ENCODE measurements at regions of chr3 and their contacts with region 1.

Region 1: GRCh38 chr3:126197854-126198584 is 17.6 kb upstream of the ALDH1L1 start:
- DNase-seq: peak; percentile 68 to 82
- ATAC-seq: peak; percentile 97 to 100
- H3K4me3 ChIP-seq: peak overlapping the region in 1 of 4 donors; percentile 15
- H3K27ac ChIP-seq: peak overlapping the region; percentile 27 to 65 (median 44)
- H3K4me1 ChIP-seq: peaks cover 0 to 8% of the 10 kb centered on the region in 2 donors
- H3K27me3 ChIP-seq: no peaks in the 10 kb centered on the region
- CTCF ChIP-seq: peak; percentile 75 to 86 (median 80)
- POLR2A ChIP-seq: no peak

Region 2: DNA sequence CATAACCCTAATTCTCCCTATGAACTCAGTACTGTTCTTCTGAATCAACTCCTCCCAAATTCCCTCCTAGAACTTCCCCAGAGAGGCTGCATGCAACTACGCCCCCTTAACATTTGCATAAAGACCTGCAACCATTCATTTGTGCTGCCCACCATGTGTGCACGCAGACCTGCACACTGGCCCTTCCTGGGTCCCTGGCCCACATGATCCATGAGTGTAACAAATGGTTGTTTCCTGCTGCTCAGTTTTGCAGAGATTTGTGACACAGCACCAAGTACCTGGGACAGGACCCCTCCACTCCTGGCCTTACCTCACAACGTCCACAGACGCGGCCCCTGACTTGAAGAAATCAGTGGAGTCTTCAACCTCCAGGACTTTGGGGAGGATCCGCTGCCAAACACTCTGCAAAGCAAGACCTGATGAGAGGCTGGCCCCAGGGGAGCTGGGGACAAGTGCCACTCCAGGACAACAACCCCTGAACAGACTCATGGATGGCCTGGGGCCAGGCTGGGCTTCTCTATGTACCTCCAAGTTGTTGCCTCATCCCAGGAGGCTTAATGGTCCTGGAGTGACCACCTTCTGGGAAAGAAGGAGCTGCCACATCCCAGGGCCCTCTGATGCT is 51.4 kb before region 1 on chr3:
- in situ Hi-C with region 1: loop called in 1 of 4 experiments (anchors 10 kb)
- intact Hi-C with region 1: no loop called
- DNase-seq: no peak
- ATAC-seq: no peak
- H3K4me3 ChIP-seq: no peak overlapping the region
- H3K27ac ChIP-seq: no peak overlapping the region
- H3K4me1 ChIP-seq: no peaks in the 10 kb centered on the region
- H3K27me3 ChIP-seq: no peaks in the 10 kb centered on the region
- CTCF ChIP-seq: no peak
- POLR2A ChIP-seq: no peak

Region 3: DNA sequence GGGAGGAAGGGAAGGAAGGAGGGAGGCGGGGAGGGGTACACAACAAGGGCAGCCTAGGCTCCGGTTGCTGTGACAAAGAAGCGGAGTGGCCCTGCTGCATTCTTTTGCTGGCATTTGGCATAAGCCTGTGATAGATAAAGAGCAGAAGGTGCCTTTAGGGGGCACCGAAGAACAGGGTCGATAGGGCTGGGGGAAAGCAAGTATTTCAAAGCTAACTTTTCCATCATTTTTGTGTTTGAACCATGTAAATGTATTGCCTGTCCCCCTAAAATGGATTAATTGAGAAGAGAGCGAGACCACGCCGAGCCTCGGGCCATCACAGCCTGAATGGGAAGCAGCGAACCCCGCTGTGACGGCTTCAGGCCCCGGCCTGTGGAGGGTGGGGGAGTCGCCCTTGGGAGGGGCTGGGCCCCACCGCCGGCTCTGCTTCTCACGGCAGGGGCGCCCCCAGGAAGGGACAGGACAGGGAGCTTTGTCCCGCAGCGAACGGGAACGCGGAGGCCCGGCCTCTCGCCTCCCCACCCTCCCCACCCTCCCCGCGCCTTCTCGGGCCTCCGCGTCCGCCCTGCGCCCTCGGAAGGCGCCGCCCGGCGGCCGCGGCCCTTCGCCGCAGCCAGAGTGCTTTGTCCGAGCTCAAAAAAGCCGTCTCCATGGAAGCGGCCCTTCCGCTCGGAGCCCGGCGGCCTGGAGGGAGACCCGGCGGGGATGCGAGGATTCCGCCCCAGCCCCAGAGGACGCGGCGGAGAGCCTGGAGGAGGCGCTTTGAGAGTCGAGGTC is 14.8 kb after region 1 on chr3:
- in situ Hi-C with region 1: no loop called
- intact Hi-C with region 1: loop called (anchors 2 kb)
- DNase-seq: peak in 1 of 2 donors; percentile 36
- ATAC-seq: peak; percentile 78 to 79
- H3K4me3 ChIP-seq: peak overlapping the region; percentile 54 to 84 (median 62)
- H3K27ac ChIP-seq: peak overlapping the region; percentile 8 to 60 (median 36)
- H3K4me1 ChIP-seq: peaks cover 16 to 19% of the 10 kb centered on the region in 2 donors
- H3K27me3 ChIP-seq: peaks cover 0 to 11% (median 0%) of the 10 kb centered on the region in 3 donors
- CTCF ChIP-seq: peak in 4 of 5 experiments; percentile 43 to 71 (median 48)
- POLR2A ChIP-seq: no peak